CD8-positive, alpha-beta T cell (primary cell): ENCODE measurements at regions of chr3 and their contacts with region 1.

Region 1: GRCh38 chr3:18444595-18445400 is 19.7 kb upstream of the SATB1 start:
- DNase-seq: peak; percentile 53 to 91 (median 78)
- ATAC-seq: peak; percentile 61
- H3K4me3 ChIP-seq: peak overlapping the region; percentile 81 to 91
- H3K4me3 Mint-ChIP-seq: peak overlapping the region; percentile 92
- H3K27ac ChIP-seq: peak overlapping the region; percentile 76 to 90
- H3K27ac Mint-ChIP-seq: peak overlapping the region; percentile 97
- H3K4me1 ChIP-seq: peaks cover 4% of the 10 kb centered on the region
- H3K4me1 Mint-ChIP-seq: peaks cover 48% of the 10 kb centered on the region
- H3K27me3 ChIP-seq: no peaks in the 10 kb centered on the region
- H3K27me3 Mint-ChIP-seq: no peaks in the 10 kb centered on the region
- CTCF ChIP-seq: no peak

Region 2: DNA sequence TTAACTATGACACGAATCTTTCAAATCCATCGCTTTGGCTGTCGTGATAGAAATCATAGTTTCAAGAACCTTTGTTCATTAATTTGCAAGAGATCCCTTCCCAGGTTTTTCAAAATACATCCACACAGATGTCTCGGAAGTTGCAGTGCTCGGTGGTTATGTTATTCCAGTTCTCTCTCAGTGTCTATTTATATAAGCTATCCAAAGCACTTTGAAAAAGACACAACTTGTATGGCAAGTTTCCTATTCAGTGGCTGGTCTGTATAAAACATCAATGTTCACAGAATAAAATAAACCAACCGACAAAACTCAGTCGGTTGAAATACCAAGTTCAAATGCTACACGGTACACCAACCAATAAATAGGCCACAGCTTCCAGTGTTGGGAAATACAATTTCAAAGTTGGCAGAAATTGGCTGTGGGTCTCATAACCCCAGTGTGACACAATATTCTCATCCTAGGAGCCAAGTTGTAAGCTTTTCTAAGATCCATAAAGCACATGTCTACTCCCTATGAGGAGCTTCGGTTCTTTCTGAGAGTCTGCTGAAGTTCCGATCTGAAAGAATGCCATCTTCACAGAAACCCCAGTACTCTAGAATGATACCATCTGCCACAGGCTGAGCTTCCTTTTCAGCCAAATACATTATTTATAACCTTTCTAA is 43.4 kb before region 1 on chr3:
- CTCF ChIA-PET with region 1: interaction called, 5 read pairs
- POLR2A ChIA-PET with region 1: interaction called, 16 read pairs
- intact Hi-C with region 1: loop called in 1 of 2 experiments (anchors 5 kb)
- DNase-seq: no peak
- ATAC-seq: peak; percentile 36
- H3K4me3 ChIP-seq: no peak overlapping the region
- H3K4me3 Mint-ChIP-seq: peak overlapping the region; percentile 70
- H3K27ac ChIP-seq: peak overlapping the region; percentile 23 to 42
- H3K27ac Mint-ChIP-seq: peak overlapping the region; percentile 96
- H3K4me1 ChIP-seq: peaks cover 82% of the 10 kb centered on the region
- H3K4me1 Mint-ChIP-seq: peaks cover 94% of the 10 kb centered on the region
- H3K27me3 ChIP-seq: no peaks in the 10 kb centered on the region
- H3K27me3 Mint-ChIP-seq: no peaks in the 10 kb centered on the region
- CTCF ChIP-seq: no peak

Region 3: GRCh38 chr3:18424729-18425640 is 19.8 kb before region 1 on chr3 and contains the start of gene SATB1:
- CTCF ChIA-PET with region 1: interaction called, 3 read pairs
- POLR2A ChIA-PET with region 1: interaction called, 35 read pairs
- intact Hi-C with region 1: loop called (anchors 1 kb)
- DNase-seq: peak; percentile 46 to 83 (median 76)
- ATAC-seq: peak; percentile 42
- H3K4me3 ChIP-seq: peak within 1 kb of the TSS; percentile 82 to 84
- H3K4me3 Mint-ChIP-seq: peak within 1 kb of the TSS; percentile 91
- H3K27ac ChIP-seq: peak within 1 kb of the TSS; percentile 76 to 83
- H3K27ac Mint-ChIP-seq: peak within 1 kb of the TSS; percentile 95
- H3K4me1 ChIP-seq: peaks cover 55% of the 10 kb centered on the region
- H3K4me1 Mint-ChIP-seq: peaks cover 76% of the 10 kb centered on the region
- H3K27me3 ChIP-seq: no peaks in the 10 kb centered on the region
- H3K27me3 Mint-ChIP-seq: no peaks in the 10 kb centered on the region
- CTCF ChIP-seq: no peak
- total RNA-seq, gene SATB1: 333 to 346 TPM

Region 4: GRCh38 chr3:18531662-18532236 is 87.0 kb after region 1 on chr3:
- CTCF ChIA-PET with region 1: no interaction called
- POLR2A ChIA-PET with region 1: no interaction called
- intact Hi-C with region 1: loop called in 1 of 2 experiments (anchors 5 kb)
- DNase-seq: no peak
- ATAC-seq: no peak
- H3K4me3 ChIP-seq: no peak overlapping the region
- H3K4me3 Mint-ChIP-seq: no peak overlapping the region
- H3K27ac ChIP-seq: no peak overlapping the region
- H3K27ac Mint-ChIP-seq: no peak overlapping the region
- H3K4me1 ChIP-seq: no peaks in the 10 kb centered on the region
- H3K4me1 Mint-ChIP-seq: peaks cover 10% of the 10 kb centered on the region
- H3K27me3 ChIP-seq: no peaks in the 10 kb centered on the region
- H3K27me3 Mint-ChIP-seq: no peaks in the 10 kb centered on the region
- CTCF ChIP-seq: no peak

Region 5: GRCh38 chr3:18758047-18758704 is 313.4 kb after region 1 on chr3:
- CTCF ChIA-PET with region 1: interaction called, 36 read pairs
- POLR2A ChIA-PET with region 1: interaction called, 13 read pairs
- intact Hi-C with region 1: loop called (anchors 1 to 5 kb)
- DNase-seq: peak in 6 of 9 experiments; percentile 12 to 91 (median 36)
- ATAC-seq: peak; percentile 97
- H3K4me3 ChIP-seq: no peak overlapping the region
- H3K4me3 Mint-ChIP-seq: no peak overlapping the region
- H3K27ac ChIP-seq: no peak overlapping the region
- H3K27ac Mint-ChIP-seq: peak overlapping the region; percentile 64
- H3K4me1 ChIP-seq: peaks cover 18% of the 10 kb centered on the region
- H3K4me1 Mint-ChIP-seq: peaks cover 44% of the 10 kb centered on the region
- H3K27me3 ChIP-seq: no peaks in the 10 kb centered on the region
- H3K27me3 Mint-ChIP-seq: no peaks in the 10 kb centered on the region
- CTCF ChIP-seq: peak; percentile 88

Region 6: DNA sequence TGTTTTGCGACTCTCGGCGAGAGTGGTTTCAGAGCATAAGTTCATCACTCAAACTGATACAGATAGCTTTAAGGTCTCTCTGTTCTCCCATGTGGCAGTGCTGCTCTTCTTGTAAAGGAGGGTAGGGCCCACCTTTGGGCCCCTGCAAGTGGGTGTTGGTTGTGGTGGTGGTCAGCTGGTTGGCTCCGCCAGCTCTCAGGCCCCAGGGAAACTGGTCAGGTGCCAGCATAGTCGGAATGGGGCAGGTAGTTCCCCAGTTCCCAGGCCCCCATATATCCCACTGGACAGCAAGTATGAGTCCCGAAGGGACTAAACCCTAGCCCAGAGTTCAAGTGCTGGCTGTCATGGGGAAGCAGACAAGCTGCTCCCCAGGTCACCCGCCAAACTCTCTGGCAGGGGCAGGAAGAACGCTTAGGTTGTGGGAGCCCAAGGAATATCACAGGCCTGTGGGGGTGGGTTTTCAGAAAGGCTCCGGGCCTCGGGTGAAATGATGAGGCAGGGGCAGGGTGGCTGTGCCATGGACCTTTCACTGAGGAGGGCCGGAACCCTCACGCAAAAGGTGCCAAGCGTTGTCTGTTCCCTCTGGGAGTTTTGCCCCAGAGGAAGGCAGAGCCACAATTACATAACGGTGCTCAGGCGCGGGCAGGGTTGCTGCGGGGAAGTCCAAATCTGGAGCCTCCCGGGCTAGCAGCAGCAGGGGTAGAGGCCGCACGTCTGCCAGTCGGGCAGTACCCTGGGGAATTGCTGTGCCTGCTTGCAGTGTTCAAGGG is 1304.2 kb after region 1 on chr3:
- CTCF ChIA-PET with region 1: no interaction called
- POLR2A ChIA-PET with region 1: no interaction called
- intact Hi-C with region 1: no loop called
- DNase-seq: no peak
- ATAC-seq: no peak
- H3K4me3 ChIP-seq: no peak overlapping the region
- H3K4me3 Mint-ChIP-seq: no peak overlapping the region
- H3K27ac ChIP-seq: no peak overlapping the region
- H3K27ac Mint-ChIP-seq: no peak overlapping the region
- H3K4me1 ChIP-seq: no peaks in the 10 kb centered on the region
- H3K4me1 Mint-ChIP-seq: no peaks in the 10 kb centered on the region
- H3K27me3 ChIP-seq: no peaks in the 10 kb centered on the region
- H3K27me3 Mint-ChIP-seq: no peaks in the 10 kb centered on the region
- CTCF ChIP-seq: no peak